ENCODE measurements at regions of chr1 and their contacts with region 1.

Region 1: GRCh38 chr1:32266921-32267591 is 16.0 kb downstream of the LCK start:
- DNase-seq: peak; percentile 64
- H3K4me3 Mint-ChIP-seq: peak overlapping the region; percentile 50
- H3K27ac Mint-ChIP-seq: peak overlapping the region; percentile 99
- H3K4me1 Mint-ChIP-seq: peaks cover 62% of the 10 kb centered on the region
- H3K27me3 Mint-ChIP-seq: no peaks in the 10 kb centered on the region

Region 2: DNA sequence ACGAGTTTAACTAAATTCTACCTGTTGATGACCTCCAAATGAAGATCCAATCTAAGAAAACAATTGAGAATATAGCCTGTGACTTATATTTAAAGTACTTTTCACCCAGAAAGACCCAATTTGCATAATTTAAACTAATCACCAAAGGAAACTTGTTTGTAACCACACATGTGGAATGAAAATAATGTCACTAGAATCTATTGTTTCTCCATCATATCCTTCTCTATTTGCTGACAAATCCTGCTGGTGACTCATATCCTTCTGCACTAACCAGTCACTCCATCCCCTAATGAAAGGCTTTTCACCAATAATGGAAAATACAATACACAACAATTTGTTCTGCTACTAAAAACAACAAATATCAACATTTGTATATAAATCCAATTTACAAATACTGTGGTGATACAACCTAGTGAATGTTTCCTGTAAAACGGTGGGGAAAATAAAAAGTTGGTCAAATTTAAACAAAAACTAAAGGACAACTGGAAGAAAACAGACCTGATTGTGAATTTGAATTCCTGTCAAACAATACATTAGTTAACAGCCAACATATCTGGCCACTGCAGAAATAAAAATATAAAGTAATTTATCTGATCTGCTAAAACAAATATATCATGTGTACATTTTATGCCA is 335.3 kb before region 1 on chr1:
- CTCF ChIA-PET with region 1: no interaction called
- intact Hi-C with region 1: loop called (anchors 5 kb)
- DNase-seq: no peak
- H3K4me3 Mint-ChIP-seq: peak overlapping the region; percentile 62
- H3K27ac Mint-ChIP-seq: peak overlapping the region; percentile 99
- H3K4me1 Mint-ChIP-seq: peaks cover 81% of the 10 kb centered on the region
- H3K27me3 Mint-ChIP-seq: no peaks in the 10 kb centered on the region

Measured in activated naive CD4-positive, alpha-beta T cell treated with anti-CD3 and anti-CD28 coated beads for 36 hours (primary cell).